Esophagus muscularis mucosa (tissue), 4 donors: ENCODE measurements at regions of chr5 and their contacts with region 1.

Region 1: GRCh38 chr5:15003511-15003920 is 131.9 kb upstream of the ANKH start:
- DNase-seq: no peak
- H3K4me3 ChIP-seq: no peak overlapping the region
- H3K27ac ChIP-seq: no peak overlapping the region
- H3K4me1 ChIP-seq: peaks cover 8 to 17% (median 14%) of the 10 kb centered on the region in 4 donors
- H3K27me3 ChIP-seq: no peaks in the 10 kb centered on the region
- CTCF ChIP-seq: peak; percentile 85 to 88 (median 87)
- EP300 ChIP-seq: no peak
- POLR2A ChIP-seq: no peak

Region 2: GRCh38 chr5:14727428-14727865 is 276.1 kb before region 1 on chr5:
- intact Hi-C with region 1: loop called (anchors 1 kb)
- DNase-seq: no peak
- H3K4me3 ChIP-seq: no peak overlapping the region
- H3K27ac ChIP-seq: no peak overlapping the region
- H3K4me1 ChIP-seq: peaks cover 10 to 28% (median 17%) of the 10 kb centered on the region in 4 donors
- H3K27me3 ChIP-seq: no peaks in the 10 kb centered on the region
- CTCF ChIP-seq: peak; percentile 94 to 97 (median 94)
- EP300 ChIP-seq: no peak
- POLR2A ChIP-seq: no peak

Region 3: DNA sequence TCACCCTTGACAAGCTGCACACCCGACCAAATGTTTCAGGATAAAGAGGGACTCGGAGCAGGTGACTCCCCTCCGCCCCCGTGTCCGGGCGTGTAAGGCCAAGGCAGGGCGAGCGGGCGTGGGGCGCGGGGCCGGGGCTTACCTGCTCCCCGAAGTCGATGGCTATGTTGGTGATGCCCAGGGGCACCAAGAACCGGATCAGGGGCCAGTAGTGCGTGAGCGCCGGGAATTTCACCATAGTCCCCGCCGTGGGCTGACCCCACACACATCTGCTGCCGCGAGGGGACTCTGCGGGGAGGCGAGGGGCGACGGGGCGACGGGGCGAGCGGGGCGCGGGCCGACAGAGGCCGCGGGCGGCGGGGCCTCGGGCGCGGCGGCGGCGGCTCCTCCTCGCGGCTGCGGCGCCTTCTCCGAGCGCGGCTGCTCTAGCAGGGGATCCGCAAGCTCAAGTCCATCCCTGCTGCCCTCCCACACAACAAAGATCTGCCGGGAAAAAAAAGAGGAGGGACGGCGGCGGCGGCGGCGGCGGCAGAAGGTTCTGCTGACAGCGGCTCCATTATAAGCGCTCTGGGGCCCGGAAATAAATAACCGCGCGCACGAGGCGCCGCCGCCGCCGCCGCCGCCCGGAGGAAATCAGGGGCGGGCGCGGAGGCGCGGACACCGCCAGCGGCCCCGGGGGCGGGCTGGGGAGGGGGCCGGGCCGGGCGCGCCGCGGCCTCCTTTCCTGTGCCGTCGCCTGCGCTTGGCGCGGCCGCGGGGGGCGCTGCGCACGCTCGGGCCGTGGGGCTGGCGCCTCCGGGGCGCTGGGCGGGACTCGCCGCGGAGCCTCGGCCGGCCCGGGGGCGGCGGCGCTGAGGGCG is 132.1 kb before region 1 on chr5 and contains the start of gene ANKH:
- intact Hi-C with region 1: loop called (anchors 5 kb)
- DNase-seq: no peak
- H3K4me3 ChIP-seq: peak within 1 kb of the TSS; percentile 77 to 96 (median 91)
- H3K27ac ChIP-seq: peak within 1 kb of the TSS; percentile 96 to 98 (median 96)
- H3K4me1 ChIP-seq: peaks cover 12 to 39% (median 30%) of the 10 kb centered on the region in 4 donors
- H3K27me3 ChIP-seq: no peaks in the 10 kb centered on the region
- CTCF ChIP-seq: peak in 1 of 3 experiments; percentile 27
- EP300 ChIP-seq: no peak
- POLR2A ChIP-seq: no peak
- total RNA-seq, gene ANKH: 33.4 to 49.4 (median 38.0) TPM

Region 4: DNA sequence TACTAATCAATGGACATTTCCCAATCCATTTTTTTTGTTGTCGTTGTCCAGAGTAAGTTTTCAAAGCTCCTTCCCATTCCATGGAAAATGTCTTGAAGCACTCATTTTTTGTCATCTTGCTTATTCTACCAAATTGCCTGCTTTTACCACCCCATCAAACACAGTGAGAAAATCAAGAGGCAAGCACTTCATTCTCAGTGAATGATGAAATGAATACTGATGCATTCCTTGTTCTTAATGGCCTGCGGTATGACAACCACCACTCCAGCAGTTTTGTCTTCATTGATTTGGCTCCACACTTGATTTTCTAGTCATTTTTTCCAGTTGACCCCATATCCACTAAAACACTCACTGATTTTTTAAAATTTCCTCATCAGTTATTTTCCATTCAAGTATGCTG is 61.6 kb after region 1 on chr5:
- intact Hi-C with region 1: no loop called
- DNase-seq: no peak
- H3K4me3 ChIP-seq: no peak overlapping the region
- H3K27ac ChIP-seq: no peak overlapping the region
- H3K4me1 ChIP-seq: no peaks in the 10 kb centered on the region
- H3K27me3 ChIP-seq: no peaks in the 10 kb centered on the region
- CTCF ChIP-seq: no peak
- EP300 ChIP-seq: no peak
- POLR2A ChIP-seq: no peak